ENCODE measurements at regions of chr1 and their contacts with region 1.

Region 1: DNA sequence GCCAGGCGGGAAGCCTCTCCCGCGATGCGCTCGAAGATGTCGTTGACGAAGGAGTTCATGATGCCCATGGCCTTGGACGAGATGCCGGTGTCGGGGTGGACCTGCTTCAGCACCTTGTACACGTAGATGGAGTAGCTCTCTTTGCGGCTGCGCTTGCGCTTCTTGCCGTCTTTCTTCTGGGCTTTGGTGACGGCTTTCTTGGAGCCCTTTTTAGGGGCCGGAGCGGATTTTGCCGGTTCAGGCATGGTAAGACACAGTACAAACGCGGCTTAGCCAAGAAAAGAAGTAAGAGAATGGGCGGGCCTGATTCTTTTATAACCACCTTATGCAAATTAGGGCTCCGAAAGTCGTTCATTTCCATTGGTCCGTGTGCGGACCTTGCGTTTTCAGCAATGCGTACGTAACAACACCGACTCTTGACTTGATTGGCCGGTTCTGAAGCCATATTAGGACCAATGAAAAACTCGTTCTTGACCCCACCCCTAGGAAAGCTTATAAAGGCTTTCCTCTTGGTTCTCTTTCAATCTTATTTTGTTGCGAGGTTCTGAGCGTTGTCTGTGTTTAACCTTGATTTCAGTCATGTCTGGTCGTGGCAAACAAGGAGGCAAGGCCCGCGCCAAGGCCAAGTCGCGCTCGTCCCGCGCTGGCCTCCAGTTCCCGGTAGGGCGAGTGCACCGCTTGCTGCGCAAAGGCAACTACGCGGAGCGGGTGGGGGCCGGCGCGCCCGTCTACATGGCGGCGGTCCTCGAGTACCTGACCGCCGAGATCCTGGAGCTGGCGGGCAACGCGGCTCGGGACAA is 12.8 kb upstream of the BOLA1 start:
- DNase-seq: peak; percentile 91
- H3K4me3 Mint-ChIP-seq: no peak overlapping the region
- H3K27ac Mint-ChIP-seq: no peak overlapping the region
- H3K4me1 Mint-ChIP-seq: peaks cover 16% of the 10 kb centered on the region
- H3K27me3 Mint-ChIP-seq: no peaks in the 10 kb centered on the region

Region 2: GRCh38 chr1:149844101-149844500 is 42.5 kb before region 1 on chr1:
- CTCF ChIA-PET with region 1: interaction called, 9 read pairs
- POLR2A ChIA-PET with region 1: interaction called, 314 read pairs
- DNase-seq: no peak
- H3K4me3 Mint-ChIP-seq: peak overlapping the region; percentile 89
- H3K27ac Mint-ChIP-seq: peak overlapping the region; percentile 91
- H3K4me1 Mint-ChIP-seq: peaks cover 47% of the 10 kb centered on the region
- H3K27me3 Mint-ChIP-seq: no peaks in the 10 kb centered on the region

Region 3: GRCh38 chr1:149917571-149918144 is 31.1 kb after region 1 on chr1 and contains the start of gene SV2A:
- CTCF ChIA-PET with region 1: no interaction called
- POLR2A ChIA-PET with region 1: interaction called, 42 read pairs
- DNase-seq: peak; percentile 51
- H3K4me3 Mint-ChIP-seq: peak within 1 kb of the TSS; percentile 85
- H3K27ac Mint-ChIP-seq: peak within 1 kb of the TSS; percentile 21
- H3K4me1 Mint-ChIP-seq: peaks cover 42% of the 10 kb centered on the region
- H3K27me3 Mint-ChIP-seq: peaks cover 4% of the 10 kb centered on the region
- total RNA-seq, gene SV2A: 14.4 to 15.2 TPM

Region 4: DNA sequence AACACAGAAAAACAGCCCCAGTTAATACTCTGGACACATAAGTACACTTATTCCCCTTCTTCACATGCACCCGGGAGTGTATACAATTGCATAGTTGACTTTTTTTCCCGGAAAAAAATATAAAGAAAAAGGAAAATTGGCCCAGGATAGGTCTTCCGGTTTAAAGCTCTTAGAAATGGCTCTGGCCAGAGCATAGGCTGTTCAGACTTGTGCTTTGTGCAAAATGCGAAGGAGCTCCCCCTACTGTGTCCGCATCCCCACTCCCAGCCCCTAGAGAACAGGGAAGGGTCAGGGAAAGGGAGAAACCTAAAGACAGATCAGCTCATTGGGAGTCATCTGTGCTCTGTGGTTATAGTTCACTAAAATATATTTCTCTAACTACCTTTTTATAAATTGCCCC is 55.6 kb after region 1 on chr1:
- CTCF ChIA-PET with region 1: no interaction called
- POLR2A ChIA-PET with region 1: interaction called, 53 read pairs
- DNase-seq: no peak
- H3K4me3 Mint-ChIP-seq: no peak overlapping the region
- H3K27ac Mint-ChIP-seq: no peak overlapping the region
- H3K4me1 Mint-ChIP-seq: peaks cover 37% of the 10 kb centered on the region
- H3K27me3 Mint-ChIP-seq: no peaks in the 10 kb centered on the region

Region 5: DNA sequence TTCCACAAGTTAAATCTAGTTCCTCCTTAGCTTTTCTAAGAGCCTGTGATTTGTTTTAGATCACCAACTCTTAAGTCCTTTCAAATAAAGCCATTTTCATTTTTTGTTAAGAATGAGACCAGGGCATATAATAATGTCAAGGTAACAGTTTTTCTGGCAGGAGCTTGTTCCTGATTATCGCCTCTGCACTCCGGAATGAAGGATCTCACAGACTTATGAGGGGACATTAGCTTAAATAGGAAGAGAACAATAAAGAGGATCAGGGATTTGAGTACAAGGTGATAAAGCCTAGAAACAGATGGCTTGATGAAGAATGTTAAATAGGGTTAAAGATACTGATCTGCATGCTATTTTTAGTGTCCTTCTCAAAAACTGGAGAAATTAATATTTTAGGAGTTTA is 137.6 kb after region 1 on chr1:
- CTCF ChIA-PET with region 1: no interaction called
- POLR2A ChIA-PET with region 1: no interaction called
- DNase-seq: no peak
- H3K4me3 Mint-ChIP-seq: no peak overlapping the region
- H3K27ac Mint-ChIP-seq: no peak overlapping the region
- H3K4me1 Mint-ChIP-seq: no peaks in the 10 kb centered on the region
- H3K27me3 Mint-ChIP-seq: peaks cover 13% of the 10 kb centered on the region

Region 6: DNA sequence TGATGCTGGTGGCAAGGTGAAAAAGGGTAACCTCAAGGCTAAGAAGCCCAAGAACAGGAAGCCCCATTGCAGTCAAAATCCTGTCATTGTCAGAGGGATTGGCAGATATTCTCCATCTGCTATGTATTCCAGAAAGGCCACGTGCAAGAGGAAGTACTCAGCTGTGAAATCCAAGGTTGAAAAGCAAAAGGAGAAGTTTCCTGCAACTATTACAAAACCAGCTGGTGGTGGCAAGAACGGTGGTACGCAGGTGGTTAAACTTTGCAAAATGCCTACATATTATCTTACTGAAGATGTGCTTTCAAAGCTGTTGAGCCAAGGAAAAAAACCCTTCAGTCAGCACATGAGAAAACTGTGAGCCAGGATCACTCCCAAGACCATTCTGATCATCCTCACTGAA is 167.3 kb after region 1 on chr1:
- CTCF ChIA-PET with region 1: interaction called, 15 read pairs
- POLR2A ChIA-PET with region 1: interaction called, 16 read pairs
- DNase-seq: no peak
- H3K4me3 Mint-ChIP-seq: no peak overlapping the region
- H3K27ac Mint-ChIP-seq: no peak overlapping the region
- H3K4me1 Mint-ChIP-seq: peaks cover 3% of the 10 kb centered on the region
- H3K27me3 Mint-ChIP-seq: peaks cover 11% of the 10 kb centered on the region

Region 7: DNA sequence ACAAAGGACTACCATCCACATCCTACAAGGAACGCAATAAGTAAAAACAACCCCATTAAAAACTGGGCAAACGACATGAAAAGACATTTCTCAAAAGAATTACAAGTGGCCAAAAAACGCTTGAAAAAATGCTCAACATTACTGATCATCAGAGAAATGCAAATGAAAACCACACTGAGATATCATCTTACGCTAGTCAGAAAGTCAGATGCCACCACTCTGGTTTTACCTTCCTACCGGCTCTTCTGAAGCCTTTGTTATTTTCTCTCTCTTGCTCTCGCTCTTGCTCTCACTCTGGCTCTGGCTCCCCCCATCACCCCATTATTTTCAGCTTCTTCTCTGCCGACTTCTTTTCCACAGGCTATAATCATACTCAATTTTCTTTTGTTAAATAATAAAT is 219.7 kb after region 1 on chr1:
- CTCF ChIA-PET with region 1: no interaction called
- POLR2A ChIA-PET with region 1: interaction called, 54 read pairs
- DNase-seq: no peak
- H3K4me3 Mint-ChIP-seq: peak overlapping the region; percentile 35
- H3K27ac Mint-ChIP-seq: peak overlapping the region; percentile 80
- H3K4me1 Mint-ChIP-seq: peaks cover 59% of the 10 kb centered on the region
- H3K27me3 Mint-ChIP-seq: no peaks in the 10 kb centered on the region

Region 8: GRCh38 chr1:150176593-150176992 is 290.0 kb after region 1 on chr1:
- CTCF ChIA-PET with region 1: no interaction called
- POLR2A ChIA-PET with region 1: no interaction called
- DNase-seq: no peak
- H3K4me3 Mint-ChIP-seq: no peak overlapping the region
- H3K27ac Mint-ChIP-seq: no peak overlapping the region
- H3K4me1 Mint-ChIP-seq: peaks cover 1% of the 10 kb centered on the region
- H3K27me3 Mint-ChIP-seq: no peaks in the 10 kb centered on the region

Region 9: DNA sequence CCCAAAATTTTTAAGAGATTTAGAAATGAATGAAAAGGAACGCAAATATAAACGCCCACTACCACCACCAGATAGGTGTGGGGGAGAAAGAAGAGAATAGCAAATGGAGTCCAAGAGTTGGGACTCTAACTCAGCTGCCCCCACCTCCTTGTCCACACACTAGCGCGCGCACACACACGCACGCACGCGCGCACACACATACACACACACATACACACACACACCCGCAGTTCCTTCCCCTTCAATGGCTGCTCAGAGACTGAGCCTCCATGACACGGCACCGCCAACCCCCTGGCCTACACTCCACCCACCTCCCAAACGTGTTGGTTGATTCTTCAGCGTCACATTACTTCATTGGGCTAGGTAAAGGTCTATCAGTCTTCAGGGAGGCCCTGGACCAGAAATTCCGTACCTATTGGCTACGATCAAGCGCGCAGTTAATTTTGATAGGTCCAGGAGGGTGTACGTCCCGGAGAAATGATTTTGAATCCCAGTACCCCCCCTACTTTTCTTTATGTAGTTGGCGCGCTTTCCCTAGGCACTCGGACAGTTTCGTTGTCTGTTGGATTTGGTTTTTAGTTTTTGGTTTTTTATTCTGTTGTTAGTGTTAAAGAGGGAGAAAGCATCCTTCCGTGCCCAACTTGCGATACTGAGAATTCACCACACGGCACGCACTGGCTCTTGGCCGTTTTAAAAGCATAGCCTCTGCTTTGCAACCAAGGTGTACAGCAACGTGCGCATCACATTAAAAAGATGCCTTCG is 349.4 kb after region 1 on chr1 and contains the start of gene ANP32E:
- CTCF ChIA-PET with region 1: interaction called, 3 read pairs
- POLR2A ChIA-PET with region 1: interaction called, 70 read pairs
- DNase-seq: peak; percentile 96
- H3K4me3 Mint-ChIP-seq: no peak within 1 kb of the TSS
- H3K27ac Mint-ChIP-seq: no peak within 1 kb of the TSS
- H3K4me1 Mint-ChIP-seq: peaks cover 22% of the 10 kb centered on the region
- H3K27me3 Mint-ChIP-seq: no peaks in the 10 kb centered on the region
- total RNA-seq, gene ANP32E: 185 TPM